Activated CD4-positive, alpha-beta T cell treated with anti-CD3 and anti-CD28 coated beads for 36 hours (primary cell): ENCODE measurements at regions of chr14 and their contacts with region 1.

Region 1: GRCh38 chr14:51979088-51979709 is 10.1 kb upstream of the RTRAF start:
- DNase-seq: peak; percentile 90
- ATAC-seq: peak; percentile 67
- H3K4me3 Mint-ChIP-seq: no peak overlapping the region
- H3K27ac Mint-ChIP-seq: no peak overlapping the region
- H3K4me1 Mint-ChIP-seq: peaks cover 9% of the 10 kb centered on the region
- H3K27me3 Mint-ChIP-seq: peaks cover 1% of the 10 kb centered on the region

Region 2: DNA sequence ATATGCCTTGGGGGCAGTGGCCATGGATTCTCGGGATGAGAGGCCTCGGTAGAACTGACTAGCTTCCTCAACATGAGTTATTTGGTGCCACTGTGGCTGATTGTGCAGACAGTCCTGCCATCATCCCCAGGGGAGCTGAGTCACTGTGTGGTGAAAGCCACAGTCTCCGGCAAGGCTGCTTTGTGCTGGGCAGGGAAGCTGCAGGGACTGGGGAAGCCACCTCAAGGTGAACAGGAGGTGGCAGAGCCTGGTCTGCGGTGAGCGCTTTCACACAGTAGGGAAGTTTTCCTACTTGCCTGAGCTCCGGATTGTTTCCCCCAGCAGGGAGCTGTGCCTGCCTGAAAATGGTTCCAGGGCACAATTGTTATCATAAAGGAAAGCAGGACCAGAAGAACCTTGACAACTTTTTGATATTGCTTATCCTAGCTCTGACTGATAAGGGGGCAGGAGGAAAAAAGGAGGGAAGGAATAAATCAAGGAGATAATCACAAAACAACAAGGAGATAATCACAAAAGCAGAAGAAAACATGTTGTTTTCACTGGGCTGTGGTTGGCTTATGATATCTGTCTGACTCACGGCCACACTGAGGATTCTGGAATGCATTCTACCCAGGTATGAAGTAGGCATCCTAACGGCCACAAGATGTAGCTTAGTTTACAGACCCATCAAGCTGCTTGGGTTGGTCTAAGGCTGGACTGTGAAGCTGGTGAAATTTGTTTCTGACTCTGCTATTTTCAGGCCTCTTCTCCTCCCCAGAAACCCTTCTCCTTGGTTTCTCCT is 151.0 kb before region 1 on chr14:
- CTCF ChIA-PET with region 1: interaction called, 15 read pairs
- POLR2A ChIA-PET with region 1: no interaction called
- intact Hi-C with region 1: loop called in 1 of 2 experiments (anchors 5 kb)
- DNase-seq: peak; percentile 88
- ATAC-seq: peak; percentile 99
- H3K4me3 Mint-ChIP-seq: peak overlapping the region; percentile 11
- H3K27ac Mint-ChIP-seq: peak overlapping the region; percentile 62
- H3K4me1 Mint-ChIP-seq: no peaks in the 10 kb centered on the region
- H3K27me3 Mint-ChIP-seq: no peaks in the 10 kb centered on the region

Region 3: DNA sequence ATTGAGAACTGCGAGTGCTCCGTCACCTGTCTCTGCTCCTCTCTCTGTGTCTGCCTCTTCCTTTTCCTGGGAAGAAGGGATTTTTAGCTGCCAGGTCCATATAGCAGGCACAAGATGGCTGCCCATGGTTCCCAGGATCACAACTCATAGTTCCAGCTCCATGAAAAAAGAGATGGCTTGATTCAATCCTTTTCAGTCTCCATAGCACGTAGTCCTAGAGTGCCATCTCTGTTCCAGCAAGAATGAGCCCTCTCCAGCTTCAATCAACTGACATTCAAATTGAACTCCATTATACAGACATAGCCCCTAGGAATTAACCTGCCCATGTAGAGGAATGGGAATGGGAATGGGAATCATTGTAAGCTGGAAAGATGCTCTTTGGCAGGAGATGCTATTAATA is 24.5 kb before region 1 on chr14:
- CTCF ChIA-PET with region 1: interaction called, 18 read pairs
- POLR2A ChIA-PET with region 1: no interaction called
- intact Hi-C with region 1: no loop called
- DNase-seq: no peak
- ATAC-seq: no peak
- H3K4me3 Mint-ChIP-seq: no peak overlapping the region
- H3K27ac Mint-ChIP-seq: no peak overlapping the region
- H3K4me1 Mint-ChIP-seq: peaks cover 9% of the 10 kb centered on the region
- H3K27me3 Mint-ChIP-seq: no peaks in the 10 kb centered on the region

Region 4: GRCh38 chr14:51989293-51990234 is 10.4 kb after region 1 on chr14 and contains the start of gene RTRAF:
- CTCF ChIA-PET with region 1: interaction called, 22 read pairs
- POLR2A ChIA-PET with region 1: no interaction called
- intact Hi-C with region 1: no loop called
- DNase-seq: peak; percentile 96
- ATAC-seq: peak; percentile 97
- H3K4me3 Mint-ChIP-seq: peak within 1 kb of the TSS; percentile 100
- H3K27ac Mint-ChIP-seq: peak within 1 kb of the TSS; percentile 98
- H3K4me1 Mint-ChIP-seq: peaks cover 40% of the 10 kb centered on the region
- H3K27me3 Mint-ChIP-seq: no peaks in the 10 kb centered on the region
- total RNA-seq, gene RTRAF: 232 to 254 TPM

Region 5: DNA sequence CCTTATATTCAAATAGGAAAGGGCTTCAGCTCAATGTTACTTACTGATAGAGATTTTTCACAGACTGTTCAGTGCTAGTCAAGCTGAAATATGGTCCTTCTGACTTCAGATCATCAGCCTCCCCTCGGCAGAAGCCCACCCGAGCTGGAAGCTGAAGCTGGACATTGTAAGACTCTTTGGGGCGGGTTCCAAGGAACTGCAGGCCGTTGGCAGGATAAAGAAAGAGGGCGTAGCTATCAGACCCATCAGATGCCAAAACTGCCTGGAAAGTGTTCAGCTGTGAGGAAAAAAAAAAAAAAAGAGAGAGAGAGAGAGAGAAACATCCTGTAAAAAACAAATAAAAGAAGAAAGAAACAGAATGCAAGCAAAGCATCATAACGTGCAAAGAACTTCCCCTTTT is 80.9 kb after region 1 on chr14:
- CTCF ChIA-PET with region 1: no interaction called
- POLR2A ChIA-PET with region 1: no interaction called
- intact Hi-C with region 1: no loop called
- DNase-seq: no peak
- ATAC-seq: no peak
- H3K4me3 Mint-ChIP-seq: no peak overlapping the region
- H3K27ac Mint-ChIP-seq: no peak overlapping the region
- H3K4me1 Mint-ChIP-seq: no peaks in the 10 kb centered on the region
- H3K27me3 Mint-ChIP-seq: peaks cover 10% of the 10 kb centered on the region

Region 6: GRCh38 chr14:52776816-52777215 is 797.6 kb after region 1 on chr14:
- CTCF ChIA-PET with region 1: no interaction called
- POLR2A ChIA-PET with region 1: no interaction called
- intact Hi-C with region 1: no loop called
- DNase-seq: no peak
- ATAC-seq: no peak
- H3K4me3 Mint-ChIP-seq: no peak overlapping the region
- H3K27ac Mint-ChIP-seq: no peak overlapping the region
- H3K4me1 Mint-ChIP-seq: no peaks in the 10 kb centered on the region
- H3K27me3 Mint-ChIP-seq: no peaks in the 10 kb centered on the region